ENCODE measurements at regions of chr22 and their contacts with region 1.

Region 1: GRCh38 chr22:20418211-20418788 is 19.3 kb downstream of the SCARF2 start:
- DNase-seq: peak; percentile 81
- H3K4me3 ChIP-seq: peak overlapping the region; percentile 52
- H3K27ac ChIP-seq: no peak overlapping the region
- H3K4me1 ChIP-seq: no peaks in the 10 kb centered on the region
- H3K27me3 ChIP-seq: no peaks in the 10 kb centered on the region
- CTCF ChIP-seq: peak; percentile 94

Region 2: DNA sequence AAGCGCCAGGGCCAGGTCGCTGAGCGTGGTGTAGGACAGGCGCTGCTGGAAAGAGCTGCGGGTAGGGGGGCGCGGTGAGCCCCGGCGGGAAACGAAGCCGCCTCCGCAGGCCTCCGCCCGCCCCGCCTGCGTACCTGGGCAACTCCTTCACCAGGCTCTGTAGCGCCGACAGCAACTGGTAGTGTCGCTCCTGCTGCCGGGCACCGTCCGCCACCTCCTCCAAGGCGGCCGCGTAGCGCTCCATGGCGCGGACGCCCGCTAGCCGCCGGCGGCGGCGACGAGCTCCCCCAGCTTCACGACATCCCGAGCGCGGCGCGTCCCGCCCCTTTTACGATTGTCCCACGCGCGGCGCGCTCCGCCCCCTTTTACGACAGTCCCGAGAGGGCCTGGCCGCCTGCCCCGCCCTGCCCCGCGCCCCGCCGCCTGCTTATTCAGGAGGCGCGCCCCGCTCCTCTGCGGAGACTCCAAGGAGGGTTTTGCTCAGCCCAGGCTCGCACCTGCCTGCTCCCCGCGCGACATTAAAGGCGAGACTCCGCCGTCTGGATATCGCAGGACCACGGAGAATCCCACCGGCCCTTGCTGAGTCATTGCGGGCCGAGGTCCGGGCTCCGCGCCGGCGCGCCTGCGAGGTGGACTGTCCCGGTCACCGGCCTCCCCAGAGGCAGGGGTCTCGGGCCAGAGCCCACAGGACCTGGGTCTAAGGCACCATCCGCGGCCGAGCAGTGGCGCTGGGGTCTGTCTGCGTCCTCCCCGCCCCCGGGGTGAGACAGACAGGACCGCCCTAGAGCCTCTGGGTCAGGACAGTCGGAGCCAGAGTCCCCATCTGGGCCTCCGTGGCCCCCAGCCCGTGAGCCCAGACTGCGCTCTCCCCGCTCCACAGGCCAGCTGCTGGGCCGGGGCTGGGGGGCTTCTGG is 98.3 kb before region 1 on chr22 and contains the start of gene DGCR6L:
- CTCF ChIA-PET with region 1: interaction called, 3 read pairs
- POLR2A ChIA-PET with region 1: interaction called, 24 read pairs
- intact Hi-C with region 1: no loop called
- DNase-seq: peak; percentile 98
- H3K4me3 ChIP-seq: peak within 1 kb of the TSS; percentile 95
- H3K27ac ChIP-seq: peak within 1 kb of the TSS; percentile 96
- H3K4me1 ChIP-seq: peaks cover 3% of the 10 kb centered on the region
- H3K27me3 ChIP-seq: no peaks in the 10 kb centered on the region
- CTCF ChIP-seq: no peak
- total RNA-seq, gene DGCR6L: 50.7 and 59.7 TPM in 2 replicates

Region 3: DNA sequence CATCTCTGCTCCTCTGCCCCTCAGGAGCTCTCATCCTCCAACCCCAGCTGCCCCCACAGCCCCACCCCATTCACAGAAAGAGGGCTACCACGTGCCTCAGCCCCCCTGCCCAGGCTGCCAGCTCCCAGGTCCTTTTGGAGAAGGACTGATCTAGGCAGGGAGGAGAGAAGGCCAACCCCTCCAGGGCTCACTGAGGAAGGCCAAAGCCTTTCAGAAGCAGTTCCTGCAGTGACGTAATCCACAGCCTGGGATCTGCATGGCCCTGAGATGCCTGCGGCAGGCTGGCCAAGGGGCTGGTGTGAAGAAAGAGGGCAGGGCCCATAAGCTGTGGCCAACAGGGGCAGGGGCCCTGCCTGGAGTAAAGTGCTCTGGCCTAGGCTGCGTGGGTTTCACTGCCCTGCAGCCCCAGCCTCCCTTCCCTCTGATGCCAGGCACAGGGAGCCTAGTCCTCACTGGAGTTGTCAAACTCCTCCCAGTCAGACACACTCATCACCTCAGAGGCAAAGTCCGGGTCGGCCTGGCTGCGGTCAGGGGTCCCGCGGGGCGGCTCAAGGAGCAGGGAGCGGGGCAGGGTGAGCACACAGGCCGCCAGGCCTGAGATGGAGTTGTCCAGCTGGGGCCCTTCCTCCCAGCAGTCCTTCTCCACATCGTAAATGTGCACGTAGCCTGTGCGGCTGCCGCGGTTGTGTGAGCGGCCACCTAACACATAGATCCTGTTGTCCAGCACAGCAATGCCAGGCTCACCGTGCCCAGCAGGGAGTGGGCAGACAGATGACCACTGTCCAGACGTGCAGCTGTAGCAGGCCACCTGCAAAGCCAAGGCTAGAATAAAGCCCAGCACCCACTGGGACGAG is 23.6 kb after region 1 on chr22:
- CTCF ChIA-PET with region 1: interaction called, 11 read pairs
- POLR2A ChIA-PET with region 1: no interaction called
- intact Hi-C with region 1: no loop called
- DNase-seq: no peak
- H3K4me3 ChIP-seq: no peak overlapping the region
- H3K27ac ChIP-seq: no peak overlapping the region
- H3K4me1 ChIP-seq: peaks cover 3% of the 10 kb centered on the region
- H3K27me3 ChIP-seq: peaks cover 5% of the 10 kb centered on the region
- CTCF ChIP-seq: no peak

Region 4: DNA sequence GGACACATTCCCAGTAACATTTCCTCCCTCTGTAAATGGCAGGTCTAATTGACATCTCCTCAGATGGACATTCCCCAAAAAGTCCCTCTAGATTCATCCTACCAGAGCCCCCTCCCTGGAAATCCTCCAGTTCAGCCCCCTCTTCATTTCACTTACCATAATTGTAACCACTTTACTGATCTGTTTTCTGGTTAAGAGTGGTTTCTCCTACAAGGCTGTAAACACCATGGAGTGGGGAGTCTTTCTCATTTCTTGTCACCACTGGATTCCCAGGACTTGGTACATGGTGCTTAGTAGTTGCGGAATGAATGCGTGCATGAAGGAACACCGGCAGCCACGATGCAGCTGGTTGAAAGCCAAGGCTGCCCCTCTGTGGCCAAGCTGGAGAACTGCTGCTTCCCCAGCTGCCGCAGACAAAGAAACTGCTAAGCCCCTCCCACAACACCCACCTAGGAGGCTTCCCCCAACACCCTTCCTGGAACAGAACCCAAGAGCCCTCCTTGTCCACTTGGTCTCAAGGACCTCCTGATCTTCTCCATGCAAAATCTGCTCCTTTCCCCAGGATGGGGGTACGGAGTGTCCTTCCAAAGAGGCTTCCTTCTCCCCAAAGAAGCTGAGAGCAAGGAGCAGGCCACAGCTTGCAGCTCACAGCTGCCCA is 37.9 kb after region 1 on chr22:
- CTCF ChIA-PET with region 1: interaction called, 36 read pairs
- POLR2A ChIA-PET with region 1: no interaction called
- intact Hi-C with region 1: loop called (anchors 2 kb)
- DNase-seq: peak; percentile 90
- H3K4me3 ChIP-seq: no peak overlapping the region
- H3K27ac ChIP-seq: no peak overlapping the region
- H3K4me1 ChIP-seq: no peaks in the 10 kb centered on the region
- H3K27me3 ChIP-seq: no peaks in the 10 kb centered on the region
- CTCF ChIP-seq: peak; percentile 96

Region 5: DNA sequence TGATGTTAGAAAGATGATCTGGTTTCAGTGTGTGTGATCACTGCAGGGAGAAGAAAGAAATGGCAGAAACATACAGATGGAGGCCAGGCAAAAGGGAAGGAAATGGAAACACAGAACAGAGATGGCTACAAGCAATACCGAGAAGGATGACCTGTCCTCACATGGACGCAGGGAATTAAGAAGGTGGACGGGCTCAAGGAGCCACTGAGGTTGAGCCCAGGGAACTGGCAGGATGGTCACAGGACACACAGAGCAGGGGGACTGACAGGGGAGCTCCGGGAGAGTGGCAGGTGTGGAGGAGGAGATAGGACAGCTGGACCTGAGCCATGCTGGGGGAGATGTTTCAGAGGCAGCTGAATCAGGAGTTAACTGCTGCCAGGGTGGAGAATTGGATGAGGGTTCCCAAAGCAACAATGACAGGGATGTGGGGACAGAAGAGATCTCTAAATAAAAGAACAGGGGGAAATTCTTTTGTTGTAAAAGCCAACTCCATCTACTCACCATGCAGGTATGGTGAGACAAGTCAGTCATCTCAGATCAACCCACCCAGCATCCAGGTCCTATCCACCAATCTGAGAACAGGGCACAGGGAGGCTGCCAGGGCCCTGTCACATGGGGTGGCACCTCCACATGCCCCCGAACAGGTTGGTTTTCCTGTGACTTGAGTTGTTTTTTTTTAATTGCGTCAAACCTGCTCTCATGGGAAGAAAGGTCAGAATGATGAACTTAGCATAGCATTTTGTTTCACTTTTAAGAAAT is 51.0 kb after region 1 on chr22:
- CTCF ChIA-PET with region 1: no interaction called
- POLR2A ChIA-PET with region 1: no interaction called
- intact Hi-C with region 1: no loop called
- DNase-seq: no peak
- H3K4me3 ChIP-seq: no peak overlapping the region
- H3K27ac ChIP-seq: no peak overlapping the region
- H3K4me1 ChIP-seq: no peaks in the 10 kb centered on the region
- H3K27me3 ChIP-seq: no peaks in the 10 kb centered on the region
- CTCF ChIP-seq: no peak

Region 6: DNA sequence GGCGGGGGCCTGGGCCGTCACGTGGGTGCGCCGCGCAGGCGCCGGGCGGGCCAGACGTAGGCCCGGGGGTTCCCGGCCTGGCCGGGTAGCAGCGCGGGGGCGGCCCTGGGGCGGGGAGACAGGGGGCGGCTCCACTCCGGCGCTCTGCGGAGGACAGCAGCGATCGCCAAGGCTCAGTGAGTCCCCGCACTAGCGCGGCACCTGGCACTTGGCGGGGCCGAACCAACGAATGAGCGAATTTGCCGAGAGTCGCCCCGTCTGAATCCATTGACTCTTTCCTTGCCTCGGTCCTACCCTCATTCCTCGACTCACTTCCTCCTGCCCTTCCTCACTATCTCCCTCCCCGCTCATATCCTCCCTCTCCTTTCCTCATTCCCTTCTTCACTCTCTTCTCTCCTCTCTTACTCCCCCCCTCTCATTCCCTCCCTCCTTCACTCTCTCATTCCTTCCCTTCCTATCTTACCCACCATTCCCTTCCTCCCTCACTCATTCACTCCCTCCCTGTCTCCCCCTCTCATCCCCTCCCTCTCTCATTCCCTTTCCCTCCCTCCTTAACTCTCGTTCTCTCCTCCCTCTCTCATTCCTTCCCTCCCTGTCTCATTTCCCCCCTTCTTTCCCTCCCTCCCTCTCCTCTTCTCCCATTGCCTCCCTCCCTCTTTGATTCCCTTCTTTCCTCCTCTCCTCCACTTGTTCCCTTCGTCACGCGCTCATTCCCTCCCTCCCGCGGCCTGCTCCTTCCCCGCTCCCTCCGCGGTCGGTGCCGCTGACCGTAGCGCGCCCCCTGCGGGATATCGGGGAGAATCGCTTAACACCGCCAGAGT is 77.8 kb after region 1 on chr22:
- CTCF ChIA-PET with region 1: interaction called, 11 read pairs
- POLR2A ChIA-PET with region 1: no interaction called
- intact Hi-C with region 1: no loop called
- DNase-seq: peak; percentile 95
- H3K4me3 ChIP-seq: peak overlapping the region; percentile 71
- H3K27ac ChIP-seq: peak overlapping the region; percentile 85
- H3K4me1 ChIP-seq: peaks cover 9% of the 10 kb centered on the region
- H3K27me3 ChIP-seq: no peaks in the 10 kb centered on the region
- CTCF ChIP-seq: peak; percentile 98

Region 7: DNA sequence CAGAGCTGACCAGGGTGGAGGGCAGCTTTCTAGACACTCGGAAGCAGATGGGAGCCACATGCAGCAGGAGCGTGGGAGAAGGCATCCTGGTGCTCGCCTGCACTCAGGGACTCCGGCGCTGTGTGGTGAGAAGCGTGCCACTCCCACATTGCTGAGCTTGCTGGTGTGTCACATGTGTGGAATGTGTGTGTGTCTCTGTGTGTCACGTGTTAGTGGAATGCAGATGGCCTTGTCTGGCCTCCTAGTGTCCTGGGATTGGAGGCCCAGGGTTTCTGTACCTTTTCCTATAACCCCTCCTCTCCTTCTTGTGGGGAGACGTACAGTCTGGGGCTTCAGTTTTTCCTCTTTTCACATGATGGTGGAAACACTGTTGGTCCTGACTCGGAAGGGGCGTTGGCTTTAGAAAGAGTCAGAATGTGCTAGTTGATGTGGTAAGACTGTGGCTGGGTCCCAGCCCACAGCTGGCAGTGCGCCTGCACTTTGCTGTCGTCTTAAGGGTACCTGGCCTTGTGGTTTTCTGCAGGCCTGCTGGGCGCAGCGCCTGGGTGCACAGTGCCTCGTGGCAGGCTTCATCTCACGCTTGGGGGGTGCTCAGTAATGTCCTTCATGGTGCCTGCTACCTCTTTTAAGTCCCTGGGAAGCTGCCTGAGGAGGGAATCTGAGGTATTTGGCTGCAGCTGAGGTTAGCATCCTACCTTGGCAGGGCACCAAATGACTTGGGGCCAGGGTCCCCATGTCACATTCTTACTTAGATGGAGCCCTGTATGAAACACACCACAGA is 150.9 kb after region 1 on chr22:
- CTCF ChIA-PET with region 1: interaction called, 10 read pairs
- POLR2A ChIA-PET with region 1: interaction called, 3 read pairs
- intact Hi-C with region 1: loop called (anchors 10 kb)
- DNase-seq: no peak
- H3K4me3 ChIP-seq: no peak overlapping the region
- H3K27ac ChIP-seq: no peak overlapping the region
- H3K4me1 ChIP-seq: peaks cover under 1% of the 10 kb centered on the region
- H3K27me3 ChIP-seq: no peaks in the 10 kb centered on the region
- CTCF ChIP-seq: no peak